ENCODE measurements at regions of chr3 and their contacts with region 1.

Region 1: GRCh38 chr3:18295171-18295920 is 129.8 kb downstream of the SATB1 start:
- DNase-seq: peak; percentile 77 to 89
- H3K4me3 ChIP-seq: no peak overlapping the region
- H3K27ac ChIP-seq: no peak overlapping the region
- H3K4me1 ChIP-seq: peaks cover 0 to 4% (median 3%) of the 10 kb centered on the region in 4 experiments; a peak in 4 of 7 replicates
- H3K27me3 ChIP-seq: no peaks in the 10 kb centered on the region
- CTCF ChIP-seq: peak; percentile 80 to 99 (median 99)
- EP300 ChIP-seq: no peak
- POLR2A ChIP-seq: no peak
- RAD21 ChIP-seq: peak; percentile 93 to 95

Region 2: DNA sequence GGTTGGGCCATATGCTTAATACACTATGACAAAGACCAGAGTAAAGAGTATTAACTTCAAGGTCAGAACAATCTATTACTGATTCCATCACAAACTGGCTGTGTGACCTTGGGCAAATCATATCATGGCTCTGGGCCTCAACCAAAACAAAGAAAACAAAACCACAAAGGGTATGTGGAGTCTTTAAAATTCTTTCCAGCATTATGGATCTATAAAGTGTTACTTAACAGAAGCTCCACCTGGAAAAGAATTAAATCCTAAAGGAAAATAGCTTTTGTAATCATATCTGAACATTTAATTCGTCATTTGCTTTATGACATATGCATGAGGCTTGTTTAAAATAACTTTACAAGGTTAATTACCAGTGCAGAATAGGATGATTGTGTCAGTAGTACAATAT is 135.7 kb before region 1 on chr3:
- CTCF ChIA-PET with region 1: no interaction called
- POLR2A ChIA-PET with region 1: no interaction called
- DNase-seq: no peak
- H3K4me3 ChIP-seq: no peak overlapping the region
- H3K27ac ChIP-seq: no peak overlapping the region
- H3K4me1 ChIP-seq: no peaks in the 10 kb centered on the region
- H3K27me3 ChIP-seq: no peaks in the 10 kb centered on the region
- CTCF ChIP-seq: no peak
- EP300 ChIP-seq: no peak
- POLR2A ChIP-seq: no peak
- RAD21 ChIP-seq: no peak

Region 3: DNA sequence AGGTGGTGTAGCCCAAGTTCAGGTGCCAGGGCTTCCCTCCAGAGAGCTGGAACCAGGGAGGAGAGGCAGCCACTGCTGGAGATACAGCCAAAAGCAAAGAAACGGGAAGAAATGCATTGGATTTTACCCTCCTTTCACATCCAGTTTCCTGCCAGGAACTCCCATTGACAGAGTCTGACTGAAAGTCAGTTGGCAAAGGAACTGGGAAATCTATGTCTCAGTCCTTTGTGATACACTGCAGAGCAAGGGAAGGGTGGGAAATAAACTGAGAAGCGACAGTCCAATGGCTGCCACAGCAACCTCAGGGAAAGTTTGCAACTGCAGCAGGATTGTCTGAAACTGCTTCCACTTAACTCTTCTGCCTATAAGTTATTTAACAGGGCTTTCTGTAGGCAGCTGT is 12.8 kb before region 1 on chr3:
- CTCF ChIA-PET with region 1: interaction called, 12 read pairs
- POLR2A ChIA-PET with region 1: interaction called, 3 read pairs
- DNase-seq: no peak
- H3K4me3 ChIP-seq: no peak overlapping the region
- H3K27ac ChIP-seq: no peak overlapping the region
- H3K4me1 ChIP-seq: no peaks in the 10 kb centered on the region
- H3K27me3 ChIP-seq: no peaks in the 10 kb centered on the region
- CTCF ChIP-seq: no peak
- EP300 ChIP-seq: no peak
- POLR2A ChIP-seq: no peak
- RAD21 ChIP-seq: no peak

Region 4: DNA sequence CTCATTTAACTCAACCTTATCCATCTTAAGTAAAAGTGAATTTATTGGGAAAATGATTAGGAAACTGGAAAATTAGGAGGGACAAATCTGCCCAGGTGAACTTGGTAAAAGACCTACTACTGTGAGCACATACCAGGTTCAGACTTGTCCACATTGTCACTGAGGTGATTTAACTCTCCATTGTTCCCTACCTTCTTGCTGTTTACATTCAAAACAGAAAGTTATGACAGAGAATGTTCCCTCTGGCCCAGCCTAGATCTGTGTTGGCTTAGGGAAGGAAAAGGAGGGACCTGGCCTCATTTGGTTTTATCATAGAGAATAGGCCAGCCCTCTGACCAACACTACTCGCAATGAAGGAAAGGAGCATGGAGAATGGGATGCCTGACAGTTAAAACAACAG is 12.2 kb after region 1 on chr3:
- CTCF ChIA-PET with region 1: interaction called, 14 read pairs
- POLR2A ChIA-PET with region 1: no interaction called
- DNase-seq: no peak
- H3K4me3 ChIP-seq: no peak overlapping the region
- H3K27ac ChIP-seq: no peak overlapping the region
- H3K4me1 ChIP-seq: no peaks in the 10 kb centered on the region
- H3K27me3 ChIP-seq: no peaks in the 10 kb centered on the region
- CTCF ChIP-seq: no peak
- EP300 ChIP-seq: no peak
- POLR2A ChIP-seq: no peak
- RAD21 ChIP-seq: no peak

Measured in H1 (cell line).